A673 (cell line): ENCODE measurements at regions of chrX and their contacts with region 1.

Region 1: DNA sequence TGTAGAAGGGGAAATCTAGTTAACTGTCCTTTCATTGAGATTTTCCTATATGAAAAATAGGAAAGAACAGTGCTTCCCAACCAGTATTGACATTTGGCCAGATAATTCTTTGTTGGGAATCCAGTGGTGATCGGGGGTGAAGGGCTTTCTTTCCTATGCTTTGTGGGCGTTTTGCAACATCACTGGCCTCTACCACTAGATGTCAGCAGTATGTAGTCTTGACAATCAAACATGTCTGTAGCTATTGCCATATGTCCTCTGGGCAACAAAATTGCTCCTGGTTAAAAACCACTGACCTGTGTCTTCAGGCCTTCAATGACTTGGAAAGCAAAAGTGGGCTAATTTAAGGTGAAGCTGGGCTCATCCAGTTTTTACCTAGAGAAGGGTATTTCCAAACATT is 658.5 kb downstream of the DACH2 start:
- DNase-seq: peak; percentile 23
- H3K4me3 ChIP-seq: no peak overlapping the region
- H3K27ac ChIP-seq: no peak overlapping the region
- H3K4me1 ChIP-seq: no peaks in the 10 kb centered on the region
- H3K27me3 ChIP-seq: no peaks in the 10 kb centered on the region
- CTCF ChIP-seq: peak; percentile 51

Region 2: GRCh38 chrX:85765651-85766050 is 1041.1 kb before region 1 on chrX:
- CTCF ChIA-PET with region 1: no interaction called
- POLR2A ChIA-PET with region 1: no interaction called
- intact Hi-C with region 1: no loop called
- DNase-seq: no peak
- H3K4me3 ChIP-seq: no peak overlapping the region
- H3K27ac ChIP-seq: no peak overlapping the region
- H3K4me1 ChIP-seq: no peaks in the 10 kb centered on the region
- H3K27me3 ChIP-seq: no peaks in the 10 kb centered on the region
- CTCF ChIP-seq: no peak

Region 3: GRCh38 chrX:86946569-86946968 is 139.8 kb after region 1 on chrX:
- CTCF ChIA-PET with region 1: no interaction called
- POLR2A ChIA-PET with region 1: no interaction called
- intact Hi-C with region 1: loop called (anchors 2 kb)
- DNase-seq: peak; percentile 28
- H3K4me3 ChIP-seq: no peak overlapping the region
- H3K27ac ChIP-seq: no peak overlapping the region
- H3K4me1 ChIP-seq: no peaks in the 10 kb centered on the region
- H3K27me3 ChIP-seq: no peaks in the 10 kb centered on the region
- CTCF ChIP-seq: peak; percentile 71